ENCODE measurements at regions of chr4 and their contacts with region 1.

Region 1: DNA sequence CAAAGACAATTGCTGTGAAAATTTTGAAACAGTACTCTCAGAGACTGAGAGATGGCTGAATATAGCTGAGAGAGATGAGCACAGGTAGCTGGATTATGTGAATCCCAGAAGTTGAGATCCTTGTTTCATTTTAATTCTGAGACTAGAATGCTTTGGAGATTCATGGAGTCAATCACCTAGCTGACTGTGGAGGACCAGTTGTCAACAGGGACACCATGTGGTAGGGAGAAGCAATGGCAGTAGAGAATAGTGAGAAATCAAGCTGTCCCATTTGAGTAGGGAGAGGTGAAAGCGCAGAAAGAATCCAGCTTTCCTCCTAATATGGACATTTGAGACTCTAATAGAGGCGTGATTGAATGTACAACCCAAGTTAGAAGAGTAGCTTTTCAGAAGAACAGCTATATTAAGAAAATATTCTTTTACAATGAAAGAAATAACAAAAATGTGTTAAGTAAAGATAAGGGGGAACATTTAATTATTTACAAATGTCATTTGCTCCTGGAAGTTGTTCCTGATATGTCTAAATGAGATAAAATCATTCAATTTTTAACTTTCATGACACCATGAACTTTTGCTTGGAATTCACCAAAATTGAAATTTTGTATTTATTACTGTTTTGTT is 30.3 kb upstream of the GLRB start:
- DNase-seq: no peak
- ATAC-seq: peak; percentile 62

Region 2: DNA sequence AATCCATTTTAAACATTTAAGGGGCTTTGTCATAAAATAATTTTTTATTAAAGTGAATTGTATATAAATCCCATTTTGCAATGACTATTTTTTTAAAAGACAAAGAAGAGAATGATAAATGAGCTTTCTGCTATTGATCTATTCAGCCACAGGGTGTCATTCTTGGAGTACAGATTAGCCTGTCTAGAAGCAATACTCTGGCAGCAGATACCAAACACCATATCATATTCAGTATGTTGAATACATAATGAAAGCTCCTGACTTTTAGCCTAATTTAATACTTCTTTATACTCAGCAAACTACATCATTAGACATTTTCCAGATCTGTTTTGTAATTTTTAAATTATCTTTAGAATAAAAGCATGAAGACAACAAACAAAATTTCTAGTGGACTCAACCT is 570.3 kb before region 1 on chr4:
- intact Hi-C with region 1: loop called (anchors 5 kb)
- DNase-seq: no peak
- ATAC-seq: peak; percentile 50

Region 3: DNA sequence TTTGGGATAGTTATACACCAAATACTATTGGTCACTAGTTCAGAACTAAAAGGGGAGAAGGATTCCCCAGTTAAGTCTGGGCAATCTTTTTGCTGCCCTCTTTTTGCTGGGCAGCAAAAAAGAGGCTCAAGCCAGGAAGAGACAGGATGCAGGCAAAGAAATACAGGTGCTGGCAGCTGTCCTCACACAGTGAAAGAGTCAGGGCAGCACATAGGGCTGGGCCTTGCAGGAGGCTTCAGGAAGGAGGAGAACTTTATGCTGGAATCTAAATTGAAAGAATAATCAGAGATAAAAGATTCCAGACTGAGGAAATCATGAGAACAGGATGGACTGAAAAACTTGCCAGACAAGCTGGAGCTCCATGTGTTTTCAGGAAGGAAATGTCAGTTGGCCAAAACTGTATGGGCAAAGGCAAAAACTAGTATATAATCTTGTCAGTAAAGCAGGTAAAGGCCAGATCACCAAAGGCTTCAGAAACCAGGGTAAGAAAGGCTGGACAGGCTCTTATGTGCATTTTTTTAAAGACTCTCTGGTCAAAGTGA is 120.8 kb before region 1 on chr4:
- intact Hi-C with region 1: no loop called
- DNase-seq: no peak
- ATAC-seq: no peak

Region 4: GRCh38 chr4:157115613-157116335 is 70.2 kb after region 1 on chr4:
- intact Hi-C with region 1: no loop called
- DNase-seq: no peak
- ATAC-seq: no peak